Activated T-helper 1 cell treated with anti-CD3 and anti-CD28 coated beads, Interleukin-12 subunit alpha, Interleukin-12 subunit beta, Interleukin-2, Interleukin-4 antibody, amounts not matched to agents 30 ng/mL and 10 ng/mL and 1 ng/mL, durations not matched to agents 14 hours and 24 hours and 36 hours (primary cell): ENCODE measurements at regions of chr4 and their contacts with region 1.

Region 1: GRCh38 chr4:122458625-122459024 is 2.1 kb upstream of the IL2 start:
- DNase-seq: peak; percentile 29
- H3K4me3 Mint-ChIP-seq: peak overlapping the region; percentile 76
- H3K27ac Mint-ChIP-seq: peak overlapping the region; percentile 87
- H3K4me1 Mint-ChIP-seq: peaks cover 46% of the 10 kb centered on the region
- H3K27me3 Mint-ChIP-seq: no peaks in the 10 kb centered on the region

Region 2: DNA sequence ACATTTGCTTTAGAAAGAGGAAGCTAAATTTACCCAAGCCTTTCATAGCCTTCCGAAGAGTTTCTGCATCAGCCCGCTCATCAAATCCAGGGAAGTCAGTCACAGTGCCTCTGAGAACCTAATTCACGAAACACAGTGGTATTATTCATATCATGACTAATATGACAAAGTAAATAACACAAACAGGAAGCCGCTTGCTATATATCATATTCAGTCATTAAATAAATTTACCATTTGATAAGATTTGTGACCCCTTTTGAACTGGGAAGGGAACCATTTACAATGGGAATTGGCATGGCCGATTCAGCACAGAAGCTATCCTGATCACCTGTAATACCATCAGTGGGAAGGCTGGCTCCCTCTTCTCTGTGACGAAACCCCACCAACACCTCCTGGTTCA is 772.4 kb before region 1 on chr4:
- intact Hi-C with region 1: no loop called
- DNase-seq: no peak
- H3K4me3 Mint-ChIP-seq: no peak overlapping the region
- H3K27ac Mint-ChIP-seq: no peak overlapping the region
- H3K4me1 Mint-ChIP-seq: peaks cover 7% of the 10 kb centered on the region
- H3K27me3 Mint-ChIP-seq: no peaks in the 10 kb centered on the region

Region 3: DNA sequence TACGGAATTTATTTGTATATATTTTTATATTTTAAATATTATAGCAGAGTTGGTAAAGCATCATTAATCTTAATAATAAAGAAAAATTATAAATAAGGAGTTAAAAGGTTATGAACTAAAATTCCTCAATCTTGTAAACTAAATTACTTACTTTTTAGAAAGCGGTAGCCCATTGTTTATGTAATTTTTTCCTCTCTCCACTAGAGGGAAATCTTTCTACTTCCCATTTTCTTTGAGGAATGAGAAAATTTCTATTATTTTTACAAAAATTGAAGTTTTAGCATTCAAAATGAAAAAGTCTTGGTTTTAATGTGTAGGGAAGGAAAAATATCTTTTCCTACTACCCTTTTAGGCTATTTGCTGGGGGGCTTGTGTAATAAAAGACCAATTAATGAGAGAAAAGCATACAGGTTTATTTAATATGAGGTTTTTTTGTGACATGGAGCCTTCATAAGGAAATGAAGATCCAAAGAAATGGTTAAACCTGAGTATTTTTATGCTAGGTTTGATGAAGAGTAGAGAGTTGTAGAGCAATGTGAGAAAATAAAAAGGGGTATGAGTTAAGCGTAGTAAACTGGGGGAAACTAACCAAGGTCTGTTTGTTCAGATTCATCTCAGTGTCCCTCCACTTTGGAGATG is 148.5 kb before region 1 on chr4:
- intact Hi-C with region 1: loop called (anchors 5 kb)
- DNase-seq: no peak
- H3K4me3 Mint-ChIP-seq: no peak overlapping the region
- H3K27ac Mint-ChIP-seq: no peak overlapping the region
- H3K4me1 Mint-ChIP-seq: peaks cover 6% of the 10 kb centered on the region
- H3K27me3 Mint-ChIP-seq: no peaks in the 10 kb centered on the region

Region 4: DNA sequence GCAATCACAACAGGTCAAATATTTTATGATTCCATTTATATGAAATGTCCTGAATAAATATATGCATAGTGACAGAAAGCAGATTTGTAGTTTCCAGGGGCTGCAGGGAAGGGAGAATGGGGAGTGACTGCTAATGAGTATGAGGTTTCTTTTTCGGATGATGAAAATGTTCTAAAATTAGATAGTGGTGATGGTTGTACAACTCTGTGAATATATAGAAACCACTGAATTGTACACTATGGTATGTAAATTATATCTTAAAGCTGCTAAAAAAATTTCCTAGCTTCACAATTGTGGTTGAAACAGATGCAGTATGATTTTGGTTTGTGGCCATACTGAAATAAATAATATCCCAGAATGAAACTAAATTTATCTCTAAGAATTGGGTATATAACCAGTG is 10.8 kb after region 1 on chr4:
- intact Hi-C with region 1: loop called (anchors 1 kb)
- DNase-seq: no peak
- H3K4me3 Mint-ChIP-seq: no peak overlapping the region
- H3K27ac Mint-ChIP-seq: no peak overlapping the region
- H3K4me1 Mint-ChIP-seq: no peaks in the 10 kb centered on the region
- H3K27me3 Mint-ChIP-seq: no peaks in the 10 kb centered on the region

Region 5: GRCh38 chr4:122542411-122543236 is 84.0 kb after region 1 on chr4:
- intact Hi-C with region 1: loop called (anchors 1 kb)
- DNase-seq: no peak
- H3K4me3 Mint-ChIP-seq: peak overlapping the region; percentile 71
- H3K27ac Mint-ChIP-seq: peak overlapping the region; percentile 93
- H3K4me1 Mint-ChIP-seq: peaks cover 85% of the 10 kb centered on the region
- H3K27me3 Mint-ChIP-seq: no peaks in the 10 kb centered on the region

Region 6: DNA sequence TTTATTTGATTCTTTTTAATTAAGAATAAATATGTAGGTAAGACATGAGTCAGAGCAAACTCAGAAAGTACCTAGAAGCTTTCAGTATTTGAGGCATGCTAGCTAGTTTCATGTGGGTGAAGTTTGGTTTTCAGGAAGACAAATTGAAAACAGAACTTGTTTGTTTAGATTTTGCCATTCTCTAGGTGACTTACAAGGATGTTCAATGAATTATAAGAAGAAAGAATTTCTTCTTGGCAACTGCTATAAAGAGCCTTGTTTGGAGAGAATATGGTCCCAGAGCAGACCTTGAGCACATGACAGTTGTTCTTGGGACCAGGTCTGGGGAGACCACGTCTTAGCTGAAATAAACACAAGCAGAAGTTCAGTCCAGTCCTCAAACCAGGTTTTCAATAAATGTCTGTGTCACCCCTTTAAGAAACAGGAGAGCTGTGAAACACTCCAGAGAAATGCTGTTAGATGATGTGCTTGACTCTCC is 200.2 kb after region 1 on chr4:
- intact Hi-C with region 1: loop called (anchors 2 kb)
- DNase-seq: no peak
- H3K4me3 Mint-ChIP-seq: peak overlapping the region; percentile 66
- H3K27ac Mint-ChIP-seq: peak overlapping the region; percentile 94
- H3K4me1 Mint-ChIP-seq: peaks cover 59% of the 10 kb centered on the region
- H3K27me3 Mint-ChIP-seq: no peaks in the 10 kb centered on the region

Region 7: DNA sequence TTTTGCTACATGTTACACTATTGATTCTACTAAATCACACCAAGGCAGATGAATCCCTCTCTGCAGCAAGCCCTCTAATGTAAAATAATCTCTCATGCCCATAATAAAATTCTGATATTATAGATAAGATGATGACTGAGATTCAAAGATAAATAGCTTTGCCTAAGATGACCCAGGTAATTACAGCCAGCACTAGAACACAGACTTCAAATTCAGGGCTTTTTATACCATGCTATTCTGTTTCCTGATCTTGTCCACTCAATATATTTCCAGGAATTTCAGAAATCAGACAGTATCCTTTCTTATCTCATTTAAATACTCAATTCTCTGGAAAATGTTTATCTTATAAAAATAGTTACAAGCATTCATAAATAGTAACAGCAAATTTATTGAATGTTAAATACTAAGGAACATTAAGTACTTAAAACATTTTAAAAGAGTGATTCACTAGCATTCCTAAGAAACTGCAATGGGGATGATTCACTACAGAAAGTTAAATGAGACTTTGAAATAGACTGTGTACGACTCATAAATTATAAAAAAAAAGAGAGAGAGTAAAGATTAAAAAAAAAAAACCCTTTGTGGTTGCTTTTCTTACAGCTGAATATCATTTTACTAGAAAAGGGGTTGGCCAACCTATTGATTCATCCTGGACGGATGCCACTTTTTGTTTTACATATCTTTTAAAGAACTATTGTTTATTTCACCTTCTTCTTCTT is 208.1 kb after region 1 on chr4:
- intact Hi-C with region 1: loop called (anchors 2 kb)
- DNase-seq: no peak
- H3K4me3 Mint-ChIP-seq: peak overlapping the region; percentile 69
- H3K27ac Mint-ChIP-seq: peak overlapping the region; percentile 74
- H3K4me1 Mint-ChIP-seq: peaks cover 88% of the 10 kb centered on the region
- H3K27me3 Mint-ChIP-seq: no peaks in the 10 kb centered on the region

Region 8: DNA sequence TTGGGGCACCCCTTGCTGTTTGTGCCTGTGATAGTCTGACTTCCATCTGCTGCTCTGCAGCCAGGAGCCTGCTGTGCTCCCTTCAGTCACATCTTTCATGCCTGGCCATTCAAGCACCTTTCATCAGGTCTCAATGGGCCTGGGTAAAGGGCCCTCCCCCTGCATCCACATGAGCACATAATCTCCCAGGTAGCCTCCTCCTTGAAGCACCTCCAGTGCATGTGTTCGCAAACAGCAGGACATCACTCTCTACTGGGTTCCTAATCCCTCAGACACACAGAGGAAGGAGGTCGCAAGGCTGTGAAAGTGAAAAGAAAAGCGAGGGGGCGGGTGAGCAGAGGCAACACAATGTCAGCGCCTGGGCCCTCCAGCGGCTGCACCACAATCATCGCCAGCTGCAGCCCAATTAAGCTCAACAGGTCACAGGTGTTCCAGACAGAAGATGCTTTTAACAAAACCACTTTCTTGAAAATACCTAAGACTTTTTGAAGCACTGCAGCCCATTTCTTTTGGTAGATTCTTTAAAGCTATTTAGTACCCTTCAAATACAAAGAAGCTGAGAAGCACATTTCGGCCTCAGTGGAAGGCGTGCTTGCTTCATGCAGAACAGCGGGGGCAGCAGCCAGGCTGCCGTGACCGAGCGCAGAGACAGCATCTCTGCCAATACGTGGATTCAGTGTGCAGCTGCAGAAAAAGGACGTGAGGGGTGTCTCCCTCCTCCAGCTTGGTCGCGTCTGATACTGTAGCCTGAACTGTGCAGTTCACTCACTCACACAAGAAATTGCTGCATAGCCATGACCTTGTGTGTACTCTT is 845.7 kb after region 1 on chr4:
- intact Hi-C with region 1: no loop called
- DNase-seq: no peak
- H3K4me3 Mint-ChIP-seq: no peak overlapping the region
- H3K27ac Mint-ChIP-seq: peak overlapping the region; percentile 8
- H3K4me1 Mint-ChIP-seq: peaks cover 27% of the 10 kb centered on the region
- H3K27me3 Mint-ChIP-seq: no peaks in the 10 kb centered on the region